ENCODE measurements at regions of chr4 and their contacts with region 1.

Region 1: GRCh38 chr4:155787113-155787710 is 28.4 kb downstream of the GUCY1B1 start:
- DNase-seq: peak; percentile 19
- ATAC-seq: peak; percentile 97
- H3K4me3 ChIP-seq: no peak overlapping the region
- H3K27ac ChIP-seq: no peak overlapping the region
- H3K4me1 ChIP-seq: no peaks in the 10 kb centered on the region
- H3K27me3 ChIP-seq: no peaks in the 10 kb centered on the region
- CTCF ChIP-seq: peak; percentile 81 to 98 (median 90)
- EP300 ChIP-seq: no peak
- POLR2A ChIP-seq: no peak
- RAD21 ChIP-seq: peak; percentile 93

Region 2: GRCh38 chr4:154807042-154807630 is 980.1 kb before region 1 on chr4:
- CTCF ChIA-PET with region 1: no interaction called
- POLR2A ChIA-PET with region 1: no interaction called
- RAD21 ChIA-PET with region 1: no interaction called
- SMC1A ChIA-PET with region 1: no interaction called
- in situ Hi-C with region 1: loop called (anchors 25 kb)
- intact Hi-C with region 1: loop called (anchors 5 kb)
- DNase-seq: peak; percentile 2
- ATAC-seq: peak; percentile 51; the same call in 2 of the 3 replicates
- H3K4me3 ChIP-seq: no peak overlapping the region
- H3K27ac ChIP-seq: no peak overlapping the region
- H3K4me1 ChIP-seq: no peaks in the 10 kb centered on the region
- H3K27me3 ChIP-seq: no peaks in the 10 kb centered on the region
- CTCF ChIP-seq: peak; percentile 37 to 76 (median 66); a peak in 5 of 6 replicates
- EP300 ChIP-seq: no peak
- POLR2A ChIP-seq: no peak
- RAD21 ChIP-seq: peak; percentile 55

Region 3: GRCh38 chr4:155187989-155188388 is 599.2 kb before region 1 on chr4:
- CTCF ChIA-PET with region 1: no interaction called
- POLR2A ChIA-PET with region 1: no interaction called
- RAD21 ChIA-PET with region 1: no interaction called
- SMC1A ChIA-PET with region 1: no interaction called
- in situ Hi-C with region 1: no loop called
- intact Hi-C with region 1: no loop called
- DNase-seq: no peak
- ATAC-seq: peak; percentile 62
- H3K4me3 ChIP-seq: no peak overlapping the region
- H3K27ac ChIP-seq: no peak overlapping the region
- H3K4me1 ChIP-seq: no peaks in the 10 kb centered on the region
- H3K27me3 ChIP-seq: no peaks in the 10 kb centered on the region
- CTCF ChIP-seq: no peak
- EP300 ChIP-seq: no peak
- POLR2A ChIP-seq: no peak
- RAD21 ChIP-seq: no peak

Region 4: GRCh38 chr4:155403886-155404285 is 383.3 kb before region 1 on chr4:
- CTCF ChIA-PET with region 1: interaction called, 13 read pairs
- POLR2A ChIA-PET with region 1: no interaction called
- RAD21 ChIA-PET with region 1: interaction called, 6 read pairs
- SMC1A ChIA-PET with region 1: interaction called, 3 read pairs
- in situ Hi-C with region 1: no loop called
- intact Hi-C with region 1: no loop called
- DNase-seq: no peak
- ATAC-seq: peak; percentile 45; the same call in 2 of the 3 replicates
- H3K4me3 ChIP-seq: no peak overlapping the region
- H3K27ac ChIP-seq: no peak overlapping the region
- H3K4me1 ChIP-seq: no peaks in the 10 kb centered on the region
- H3K27me3 ChIP-seq: no peaks in the 10 kb centered on the region
- CTCF ChIP-seq: no peak; a peak in 1 of 6 replicates
- EP300 ChIP-seq: no peak
- POLR2A ChIP-seq: no peak
- RAD21 ChIP-seq: peak; percentile 30; the same call in 1 of the 2 replicates

Region 5: GRCh38 chr4:155529272-155529671 is 257.9 kb before region 1 on chr4:
- CTCF ChIA-PET with region 1: interaction called, 75 read pairs
- POLR2A ChIA-PET with region 1: interaction called, 3 read pairs
- RAD21 ChIA-PET with region 1: interaction called, 30 read pairs
- SMC1A ChIA-PET with region 1: interaction called, 40 read pairs
- in situ Hi-C with region 1: no loop called
- intact Hi-C with region 1: loop called (anchors 2 kb)
- DNase-seq: no peak
- ATAC-seq: peak; percentile 71
- H3K4me3 ChIP-seq: no peak overlapping the region
- H3K27ac ChIP-seq: no peak overlapping the region
- H3K4me1 ChIP-seq: no peaks in the 10 kb centered on the region
- H3K27me3 ChIP-seq: peaks cover 0 to 3% of the 10 kb centered on the region in 2 experiments; a peak in 1 of 4 replicates
- CTCF ChIP-seq: peak; percentile 13 to 55 (median 20); a peak in 3 of 6 replicates
- EP300 ChIP-seq: no peak
- POLR2A ChIP-seq: no peak
- RAD21 ChIP-seq: peak; percentile 51

Region 6: GRCh38 chr4:155675709-155676429 is 111.3 kb before region 1 on chr4:
- CTCF ChIA-PET with region 1: interaction called, 7 read pairs
- POLR2A ChIA-PET with region 1: no interaction called
- RAD21 ChIA-PET with region 1: interaction called, 10 read pairs
- SMC1A ChIA-PET with region 1: interaction called, 14 read pairs
- in situ Hi-C with region 1: no loop called
- intact Hi-C with region 1: no loop called
- DNase-seq: no peak
- ATAC-seq: peak; percentile 86
- H3K4me3 ChIP-seq: no peak overlapping the region
- H3K27ac ChIP-seq: no peak overlapping the region
- H3K4me1 ChIP-seq: no peaks in the 10 kb centered on the region
- H3K27me3 ChIP-seq: no peaks in the 10 kb centered on the region
- CTCF ChIP-seq: no peak
- EP300 ChIP-seq: no peak
- POLR2A ChIP-seq: no peak
- RAD21 ChIP-seq: no peak

Region 7: DNA sequence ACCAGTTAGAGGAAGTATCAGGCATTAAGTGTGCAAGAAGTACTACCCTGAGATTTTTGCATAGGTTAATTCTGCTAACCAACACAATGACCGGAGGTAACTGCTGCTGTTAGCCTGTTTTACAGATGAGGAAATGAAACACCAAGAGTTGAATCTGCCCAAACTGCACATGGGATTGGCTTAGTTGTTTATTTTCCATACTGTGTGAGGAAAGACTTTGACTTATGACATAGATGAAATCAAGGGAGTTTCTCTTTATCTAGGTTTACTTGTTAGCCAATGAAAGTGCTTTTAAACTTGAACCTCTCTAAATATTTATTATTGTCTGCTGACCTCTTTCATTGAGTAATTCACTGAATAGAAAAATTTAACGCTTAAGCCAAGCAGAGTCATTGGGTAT is 18.1 kb before region 1 on chr4:
- CTCF ChIA-PET with region 1: interaction called, 16 read pairs
- POLR2A ChIA-PET with region 1: interaction called, 3 read pairs
- RAD21 ChIA-PET with region 1: interaction called, 15 read pairs
- SMC1A ChIA-PET with region 1: interaction called, 68 read pairs
- in situ Hi-C with region 1: no loop called
- intact Hi-C with region 1: no loop called
- DNase-seq: no peak
- ATAC-seq: peak; percentile 86
- H3K4me3 ChIP-seq: no peak overlapping the region
- H3K27ac ChIP-seq: no peak overlapping the region
- H3K4me1 ChIP-seq: no peaks in the 10 kb centered on the region
- H3K27me3 ChIP-seq: no peaks in the 10 kb centered on the region
- CTCF ChIP-seq: no peak
- EP300 ChIP-seq: no peak
- POLR2A ChIP-seq: no peak
- RAD21 ChIP-seq: no peak